ENCODE measurements at regions of chr1 and their contacts with region 1.

Region 1: DNA sequence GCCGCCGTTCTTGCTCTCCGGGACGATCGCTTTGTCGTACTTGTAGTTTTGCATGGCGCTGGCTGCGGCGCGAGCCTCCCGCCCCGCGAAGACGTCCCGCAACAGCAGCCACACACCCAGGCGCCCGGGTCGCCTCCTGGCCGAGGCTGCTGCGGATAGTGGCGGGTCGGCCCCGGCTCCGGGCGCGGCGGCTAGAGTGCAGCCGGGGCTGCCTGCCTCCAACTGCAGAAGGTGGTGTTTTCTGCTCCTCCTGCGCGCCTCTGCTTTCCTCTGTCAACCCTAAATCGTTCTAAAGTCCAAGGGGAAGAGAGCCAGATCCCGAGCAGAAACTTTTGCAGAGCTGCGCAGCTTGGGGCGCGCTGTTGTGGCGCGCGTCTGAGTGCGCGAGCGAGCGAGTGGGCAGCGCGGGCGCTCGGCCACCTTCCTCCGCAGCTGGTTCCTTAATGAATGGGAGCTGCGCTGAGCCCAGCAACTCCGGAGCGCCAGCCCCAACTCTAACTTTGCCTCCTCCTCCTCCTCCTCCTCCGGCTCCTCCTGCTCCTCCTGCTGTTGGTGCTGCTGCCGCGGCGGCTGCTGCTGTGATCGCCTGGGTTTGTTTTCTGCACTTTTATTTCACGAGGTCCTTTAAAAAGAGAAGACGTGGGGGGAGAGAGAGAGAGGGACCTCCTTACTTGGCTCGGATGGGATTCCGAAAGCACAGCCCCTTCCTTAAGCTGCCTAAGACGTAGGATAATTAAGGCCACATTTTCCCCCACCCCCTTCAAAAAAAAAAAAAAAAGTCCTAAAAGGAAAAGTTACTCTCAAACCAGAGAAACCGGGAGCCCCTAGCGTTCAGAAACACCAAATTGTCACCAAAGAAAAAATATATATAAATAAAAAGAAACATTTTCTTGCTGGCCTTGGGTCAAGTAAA is at the start of gene PLPP3:
- DNase-seq: peak; percentile 66 to 92 (median 82)

Region 2: DNA sequence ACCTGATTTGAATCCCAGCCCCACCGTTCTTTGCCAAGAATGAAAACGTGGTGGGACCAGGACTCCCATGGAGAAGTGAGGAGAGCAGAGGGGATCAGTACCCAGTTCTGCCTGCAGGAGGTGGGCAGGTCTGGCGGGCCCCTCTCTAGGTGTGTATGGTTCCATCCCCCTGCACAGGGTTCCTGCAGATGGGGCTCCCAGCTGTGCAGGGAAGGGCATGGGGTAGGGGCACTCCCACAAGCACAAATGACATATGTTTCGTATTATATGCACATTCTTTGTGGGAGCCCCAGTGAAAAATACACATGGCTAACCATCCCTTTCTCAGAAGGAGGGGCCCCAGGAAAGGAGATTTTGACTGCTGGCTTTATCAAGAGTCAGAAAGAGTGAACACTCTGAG is 144.5 kb before region 1 on chr1:
- intact Hi-C with region 1: loop called (anchors 5 kb)
- DNase-seq: peak in 1 of 42 donors; percentile 14

Region 3: GRCh38 chr1:56477164-56478111 is 101.8 kb before region 1 on chr1:
- intact Hi-C with region 1: loop called (anchors 10 kb)
- DNase-seq: peak; percentile 30 to 85 (median 72)